ENCODE measurements at regions of chr15 and their contacts with region 1.

Region 1: GRCh38 chr15:30940359-30940758 is 36.6 kb downstream of the FAN1 start:
- DNase-seq: peak; percentile 10
- ATAC-seq: peak; percentile 97
- H3K4me3 ChIP-seq: no peak overlapping the region
- H3K27ac ChIP-seq: no peak overlapping the region
- H3K4me1 ChIP-seq: no peaks in the 10 kb centered on the region
- H3K27me3 ChIP-seq: no peaks in the 10 kb centered on the region
- CTCF ChIP-seq: no peak

Region 2: DNA sequence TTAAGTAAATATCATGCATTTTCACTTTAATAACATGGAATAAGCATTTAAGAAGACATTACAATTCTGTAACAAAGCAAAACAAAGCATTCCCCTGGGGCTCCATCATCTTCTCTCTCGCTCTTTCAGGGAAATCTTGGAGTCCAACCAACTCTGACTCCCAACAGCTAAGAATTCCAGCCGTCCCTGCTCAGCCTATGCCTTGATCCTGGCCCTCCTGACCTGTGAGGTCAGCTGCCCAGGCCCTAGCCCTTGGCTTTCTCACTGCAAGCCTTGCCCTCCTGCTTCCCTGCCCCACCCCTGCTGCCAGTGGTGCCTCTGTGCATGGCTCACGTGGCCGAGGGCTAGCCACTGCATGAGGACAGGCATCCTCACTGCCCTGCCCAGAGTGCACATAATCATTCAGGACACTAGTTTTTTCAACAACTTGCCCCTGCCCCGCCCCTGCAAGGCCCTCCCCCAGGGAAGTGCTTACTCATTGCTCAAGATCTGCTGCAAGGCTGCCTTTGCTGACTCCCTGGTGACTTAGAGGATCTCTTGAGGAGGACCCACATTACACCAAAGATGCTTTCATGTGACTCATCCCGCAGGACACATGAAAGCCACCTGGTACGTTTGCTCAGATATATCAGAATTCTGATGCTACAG is 13.5 kb after region 1 on chr15:
- CTCF ChIA-PET with region 1: no interaction called
- POLR2A ChIA-PET with region 1: no interaction called
- intact Hi-C with region 1: loop called (anchors 2 kb)
- DNase-seq: peak; percentile 91
- ATAC-seq: peak; percentile 97
- H3K4me3 ChIP-seq: no peak overlapping the region
- H3K27ac ChIP-seq: peak overlapping the region; percentile 48
- H3K4me1 ChIP-seq: peaks cover 16% of the 10 kb centered on the region
- H3K27me3 ChIP-seq: no peaks in the 10 kb centered on the region
- CTCF ChIP-seq: no peak

Region 3: DNA sequence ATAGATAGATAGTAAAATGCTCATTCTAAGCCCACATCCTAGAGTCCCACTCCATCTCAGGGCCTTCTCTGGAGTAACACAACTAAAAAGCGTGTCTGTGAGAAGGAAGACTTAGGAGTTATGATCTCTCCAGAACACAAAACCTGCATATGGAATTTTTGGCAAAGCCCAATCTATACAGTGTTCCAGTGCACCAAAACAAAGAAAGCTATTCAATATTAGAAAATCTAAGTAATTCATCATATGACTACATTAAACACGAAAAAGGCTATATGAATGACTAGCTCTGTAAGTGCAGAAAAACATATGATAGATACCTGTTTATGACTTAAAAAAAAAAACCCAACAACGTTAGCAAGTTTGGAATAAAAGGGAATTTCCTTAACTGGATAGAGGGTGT is 23.3 kb after region 1 on chr15:
- CTCF ChIA-PET with region 1: no interaction called
- POLR2A ChIA-PET with region 1: no interaction called
- intact Hi-C with region 1: loop called (anchors 2 kb)
- DNase-seq: no peak
- ATAC-seq: no peak
- H3K4me3 ChIP-seq: no peak overlapping the region
- H3K27ac ChIP-seq: no peak overlapping the region
- H3K4me1 ChIP-seq: no peaks in the 10 kb centered on the region
- H3K27me3 ChIP-seq: no peaks in the 10 kb centered on the region
- CTCF ChIP-seq: no peak

Region 4: GRCh38 chr15:30974112-30974511 is 33.8 kb after region 1 on chr15:
- CTCF ChIA-PET with region 1: no interaction called
- POLR2A ChIA-PET with region 1: no interaction called
- intact Hi-C with region 1: no loop called
- DNase-seq: no peak
- ATAC-seq: no peak
- H3K4me3 ChIP-seq: no peak overlapping the region
- H3K27ac ChIP-seq: no peak overlapping the region
- H3K4me1 ChIP-seq: no peaks in the 10 kb centered on the region
- H3K27me3 ChIP-seq: no peaks in the 10 kb centered on the region
- CTCF ChIP-seq: no peak

Region 5: DNA sequence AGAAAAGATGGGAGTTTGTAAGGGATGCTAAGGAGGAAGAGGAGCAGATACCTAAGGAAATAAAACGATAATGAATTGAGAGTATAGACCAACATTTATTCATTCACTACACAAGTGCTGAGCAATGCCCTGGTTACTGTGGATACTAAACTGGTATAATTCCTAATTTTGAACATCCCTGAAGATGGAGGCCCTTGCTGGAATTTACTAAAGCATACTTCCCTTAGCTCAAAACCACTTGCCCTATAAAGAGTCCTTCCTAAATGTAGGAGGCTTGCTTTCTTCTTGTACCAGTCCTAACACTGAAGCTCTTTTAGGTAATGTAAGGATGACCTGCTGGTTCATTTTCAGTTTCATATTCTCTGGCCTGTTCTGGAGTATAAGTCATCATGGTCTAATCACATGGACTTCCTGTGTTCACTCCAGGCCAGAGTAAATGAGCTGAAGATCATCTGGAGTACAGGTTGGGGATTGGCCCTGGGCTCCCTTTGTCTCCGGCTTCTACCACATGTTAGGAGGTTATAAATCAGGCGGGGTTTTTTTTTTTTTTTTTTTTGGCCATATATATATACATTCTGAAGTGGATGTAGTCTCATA is 91.2 kb after region 1 on chr15:
- CTCF ChIA-PET with region 1: no interaction called
- POLR2A ChIA-PET with region 1: no interaction called
- intact Hi-C with region 1: no loop called
- DNase-seq: no peak
- ATAC-seq: no peak
- H3K4me3 ChIP-seq: no peak overlapping the region
- H3K27ac ChIP-seq: no peak overlapping the region
- H3K4me1 ChIP-seq: no peaks in the 10 kb centered on the region
- H3K27me3 ChIP-seq: peaks cover 35% of the 10 kb centered on the region
- CTCF ChIP-seq: no peak

Region 6: DNA sequence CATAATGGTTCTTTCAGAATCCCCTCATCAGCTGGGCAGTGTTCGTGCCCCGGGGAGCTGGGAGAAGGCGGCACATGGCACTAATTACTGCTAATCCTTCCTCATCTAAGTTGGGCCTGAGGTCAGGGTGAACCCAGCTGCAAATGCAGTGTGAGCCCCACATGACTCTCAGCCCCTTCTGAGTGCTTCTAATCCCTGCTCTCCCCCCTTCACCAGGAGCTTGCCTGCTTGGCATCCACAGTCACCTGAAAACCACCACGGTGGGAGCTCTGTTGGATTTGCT is 161.6 kb after region 1 on chr15:
- CTCF ChIA-PET with region 1: no interaction called
- POLR2A ChIA-PET with region 1: no interaction called
- intact Hi-C with region 1: no loop called
- DNase-seq: no peak
- ATAC-seq: no peak
- H3K4me3 ChIP-seq: no peak overlapping the region
- H3K27ac ChIP-seq: no peak overlapping the region
- H3K4me1 ChIP-seq: peaks cover 6% of the 10 kb centered on the region
- H3K27me3 ChIP-seq: peaks cover 25% of the 10 kb centered on the region
- CTCF ChIP-seq: no peak